Astrocyte of the spinal cord (primary cell): ENCODE measurements at regions of chr11 and their contacts with region 1.

Region 1: DNA sequence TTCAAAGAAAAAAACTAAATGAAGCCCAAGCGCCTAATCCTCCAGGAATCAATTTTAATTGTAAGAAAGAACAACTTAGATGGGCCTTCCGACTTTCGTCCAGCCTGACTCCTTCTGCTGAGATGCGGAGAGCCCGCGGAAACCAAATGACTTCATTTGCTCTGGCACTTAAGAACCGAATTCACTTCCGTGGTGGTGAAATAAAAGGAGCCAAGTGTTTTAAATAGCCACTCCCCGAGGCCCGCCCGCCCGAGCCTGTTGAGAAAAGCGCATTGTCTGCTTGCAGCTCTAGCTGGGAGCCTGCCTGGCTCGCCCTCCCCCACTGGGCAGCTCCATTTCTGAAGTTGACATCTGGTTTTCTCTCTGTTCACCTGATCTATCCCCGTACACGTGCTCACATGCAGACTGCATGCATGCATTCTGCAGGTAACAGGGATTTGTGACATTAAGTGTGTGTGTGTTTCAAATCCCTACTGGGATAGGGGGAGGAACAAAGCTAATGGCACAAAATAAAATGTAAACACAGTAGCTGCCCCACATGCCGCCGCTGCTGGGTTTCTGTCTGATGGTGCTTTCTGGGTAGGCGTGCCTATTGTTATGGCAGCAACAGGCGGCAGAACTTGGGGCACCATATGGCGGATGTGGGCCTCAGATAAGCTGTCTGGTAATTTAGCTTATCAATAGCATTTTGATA is 6.2 kb downstream of the TEAD1 start:
- DNase-seq: peak; percentile 95
- H3K4me3 ChIP-seq: peak overlapping the region; percentile 0
- CTCF ChIP-seq: no peak

Region 2: DNA sequence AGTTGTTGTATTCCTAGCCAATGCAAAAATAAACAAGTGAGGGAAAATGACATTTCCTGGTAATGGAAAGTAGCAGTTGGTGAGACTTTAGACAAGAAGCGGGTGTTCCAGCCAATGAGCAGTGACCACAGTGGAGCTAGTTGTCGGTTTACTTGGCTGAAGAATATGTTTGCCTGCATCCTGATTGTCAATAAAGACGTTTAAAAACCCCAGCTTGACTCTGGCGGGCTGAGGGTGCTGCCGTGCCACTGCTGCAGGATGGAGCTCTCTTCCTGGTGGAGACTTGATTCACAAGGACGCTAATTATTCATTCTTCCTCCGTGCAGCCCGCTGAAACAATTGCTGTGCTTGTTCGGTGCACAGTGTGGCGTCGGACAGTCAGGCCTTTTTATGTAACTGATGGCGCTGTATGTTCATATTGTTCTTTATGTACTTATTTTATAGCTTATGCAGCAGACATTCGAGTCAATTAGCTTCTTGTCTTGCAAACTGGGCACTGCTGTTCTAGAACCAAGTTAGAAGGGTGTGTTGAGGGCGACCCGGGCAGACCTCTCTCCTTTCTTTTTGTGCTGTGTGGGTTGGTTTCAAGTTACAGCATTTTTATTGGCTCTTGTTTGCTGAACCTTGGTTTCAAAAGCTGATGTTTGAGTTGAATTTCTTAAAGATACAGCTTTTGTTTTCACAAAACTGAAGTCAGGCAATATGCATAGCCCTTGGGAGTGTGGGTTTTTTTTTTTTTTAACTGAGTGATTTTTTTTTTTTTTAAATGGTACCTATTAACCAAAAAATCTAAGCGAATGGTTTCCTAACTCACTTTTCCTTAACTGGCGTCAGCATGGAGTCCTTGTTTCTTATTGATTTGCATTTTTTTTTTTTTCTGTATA is 147.8 kb after region 1 on chr11:
- in situ Hi-C with region 1: loop called (anchors 25 kb)
- DNase-seq: peak; percentile 86
- H3K4me3 ChIP-seq: peak overlapping the region; percentile 41
- CTCF ChIP-seq: peak; percentile 9